Endothelial cell of umbilical vein (primary cell): ENCODE measurements at regions of chr10 and their contacts with region 1.

Region 1: DNA sequence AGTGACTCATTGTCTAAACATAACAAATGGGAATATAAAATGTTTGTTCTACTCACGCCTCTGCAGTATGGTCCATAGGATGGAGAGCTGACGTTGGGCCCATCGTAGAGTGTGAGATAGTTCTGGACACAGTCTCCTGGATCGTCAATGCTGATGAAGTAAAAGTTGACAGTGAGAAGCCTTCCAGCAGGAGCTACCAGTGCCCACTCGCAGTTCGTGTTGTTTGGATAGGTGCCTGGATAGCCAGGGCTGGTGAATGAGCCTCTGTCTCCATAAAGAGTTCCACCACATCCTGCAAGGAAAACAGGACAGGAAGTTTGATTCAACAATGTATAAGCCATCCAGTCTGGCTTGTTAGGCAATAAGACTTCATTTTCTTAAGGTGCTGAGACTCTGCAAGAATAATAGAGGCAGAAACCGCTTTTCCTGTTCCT is 79.6 kb downstream of the OR13A1 start:
- DNase-seq: peak; percentile 78
- H3K4me3 ChIP-seq: no peak overlapping the region
- H3K27ac ChIP-seq: peak overlapping the region; percentile 14
- H3K4me1 ChIP-seq: peaks cover 28% of the 10 kb centered on the region
- H3K27me3 ChIP-seq: no peaks in the 10 kb centered on the region
- CTCF ChIP-seq: no peak
- POLR2A ChIP-seq: no peak

Region 2: GRCh38 chr10:44186150-44186549 is 1049.7 kb before region 1 on chr10:
- CTCF ChIA-PET with region 1: no interaction called
- POLR2A ChIA-PET with region 1: no interaction called
- dilution Hi-C with region 1: no loop called
- intact Hi-C with region 1: no loop called
- DNase-seq: no peak
- H3K4me3 ChIP-seq: no peak overlapping the region
- H3K27ac ChIP-seq: no peak overlapping the region
- H3K4me1 ChIP-seq: no peaks in the 10 kb centered on the region
- H3K27me3 ChIP-seq: no peaks in the 10 kb centered on the region
- CTCF ChIP-seq: no peak
- POLR2A ChIP-seq: no peak

Region 3: GRCh38 chr10:44857363-44858016 is 378.3 kb before region 1 on chr10:
- CTCF ChIA-PET with region 1: no interaction called
- POLR2A ChIA-PET with region 1: no interaction called
- dilution Hi-C with region 1: no loop called
- intact Hi-C with region 1: no loop called
- DNase-seq: peak; percentile 40
- H3K4me3 ChIP-seq: no peak overlapping the region
- H3K27ac ChIP-seq: no peak overlapping the region
- H3K4me1 ChIP-seq: no peaks in the 10 kb centered on the region
- H3K27me3 ChIP-seq: no peaks in the 10 kb centered on the region
- CTCF ChIP-seq: peak; percentile 94 to 97
- POLR2A ChIP-seq: no peak

Region 4: DNA sequence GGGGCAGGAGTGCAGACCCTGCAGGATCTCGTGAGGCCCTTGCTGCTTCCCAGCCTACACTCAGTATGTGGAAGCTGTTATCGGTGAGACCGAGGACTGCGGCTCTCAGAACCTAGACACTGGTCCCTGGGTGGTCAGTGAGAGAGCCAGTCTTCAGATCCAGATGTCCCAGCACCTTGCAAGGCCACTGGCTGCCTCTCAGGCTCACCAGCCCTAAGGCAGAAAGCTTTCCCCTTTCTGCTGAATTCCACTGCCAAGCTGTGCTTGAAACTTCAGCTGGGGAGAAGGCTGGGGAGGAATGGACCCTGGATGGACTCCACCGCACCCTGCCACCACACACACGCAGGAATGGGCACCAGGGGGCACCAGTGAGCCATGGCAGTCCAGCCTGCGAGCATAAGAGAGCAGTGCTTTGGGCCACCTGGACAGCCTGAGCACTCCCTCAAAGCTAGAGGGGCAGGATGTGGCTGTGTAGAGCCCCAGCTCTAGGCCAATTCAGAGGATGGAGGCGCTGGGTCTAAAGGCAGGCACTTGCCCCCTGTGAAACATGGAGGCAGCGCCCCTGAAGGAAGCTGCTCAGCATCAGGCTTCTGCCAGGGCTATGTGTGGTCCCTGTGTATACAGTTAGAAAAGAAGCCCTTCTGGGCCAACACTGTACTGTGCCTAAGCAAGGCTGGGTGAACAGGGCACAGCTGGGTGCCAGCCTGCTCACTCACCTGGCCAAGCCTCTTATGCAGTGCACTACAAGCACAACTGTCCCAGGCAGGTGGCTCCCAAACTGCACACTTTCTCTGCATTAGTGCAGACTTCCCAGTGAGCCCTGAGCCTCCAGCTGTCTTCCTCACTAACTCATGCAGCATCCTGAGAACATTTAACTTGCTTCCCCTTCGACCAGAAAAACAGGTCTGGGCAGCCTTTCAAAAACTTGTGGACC is 303.0 kb before region 1 on chr10:
- CTCF ChIA-PET with region 1: interaction called, 10 read pairs
- POLR2A ChIA-PET with region 1: no interaction called
- dilution Hi-C with region 1: no loop called
- intact Hi-C with region 1: loop called (anchors 2 kb)
- DNase-seq: peak; percentile 76
- H3K4me3 ChIP-seq: no peak overlapping the region
- H3K27ac ChIP-seq: no peak overlapping the region
- H3K4me1 ChIP-seq: no peaks in the 10 kb centered on the region
- H3K27me3 ChIP-seq: no peaks in the 10 kb centered on the region
- CTCF ChIP-seq: peak; percentile 88 to 98
- POLR2A ChIP-seq: no peak

Region 5: GRCh38 chr10:45008524-45009161 is 227.2 kb before region 1 on chr10:
- CTCF ChIA-PET with region 1: interaction called, 11 read pairs
- POLR2A ChIA-PET with region 1: no interaction called
- dilution Hi-C with region 1: no loop called
- intact Hi-C with region 1: loop called (anchors 2 kb)
- DNase-seq: peak; percentile 94
- H3K4me3 ChIP-seq: no peak overlapping the region
- H3K27ac ChIP-seq: no peak overlapping the region
- H3K4me1 ChIP-seq: peaks cover 4% of the 10 kb centered on the region
- H3K27me3 ChIP-seq: no peaks in the 10 kb centered on the region
- CTCF ChIP-seq: peak; percentile 70 to 77
- POLR2A ChIP-seq: no peak

Region 6: DNA sequence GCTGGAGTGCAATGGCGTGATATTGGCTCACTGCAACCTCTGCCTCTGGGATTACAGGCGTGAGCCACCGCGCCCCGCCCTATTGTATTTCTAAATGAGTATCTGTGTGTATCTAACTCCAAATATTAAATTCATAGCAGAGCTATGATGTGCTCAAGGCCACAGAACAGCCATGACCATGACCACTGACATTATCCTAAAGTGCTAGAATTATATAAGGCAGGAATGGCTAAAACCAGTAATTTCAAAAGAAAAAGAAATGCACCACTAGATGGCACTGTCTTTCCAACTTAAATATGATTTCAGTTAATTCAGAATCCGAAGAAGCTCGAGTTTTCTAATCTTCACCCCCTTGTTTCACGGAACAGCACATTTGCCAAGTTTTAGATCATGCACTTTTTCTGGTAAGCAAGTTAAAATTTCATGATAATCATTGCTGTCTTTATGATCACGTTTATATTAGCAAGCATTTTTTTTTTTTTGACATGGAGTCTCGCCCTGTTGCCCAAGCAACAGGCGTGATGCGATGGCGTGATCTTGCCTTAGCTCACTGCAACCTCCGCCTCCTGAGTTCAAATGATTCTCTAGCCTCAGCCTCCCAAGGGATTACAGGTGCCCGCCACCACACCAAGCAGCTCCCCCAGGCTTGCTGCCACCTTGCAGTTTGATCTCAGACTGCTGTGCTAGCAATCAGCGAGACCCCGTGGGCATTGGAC is 14.3 kb after region 1 on chr10:
- CTCF ChIA-PET with region 1: interaction called, 70 read pairs
- POLR2A ChIA-PET with region 1: no interaction called
- dilution Hi-C with region 1: no loop called
- intact Hi-C with region 1: loop called (anchors 1 kb)
- DNase-seq: peak; percentile 71
- H3K4me3 ChIP-seq: peak overlapping the region in 2 of 3 experiments; percentile 21 to 58
- H3K27ac ChIP-seq: peak overlapping the region; percentile 23
- H3K4me1 ChIP-seq: no peaks in the 10 kb centered on the region
- H3K27me3 ChIP-seq: peaks cover 0 to 3% of the 10 kb centered on the region in 2 experiments
- CTCF ChIP-seq: peak; percentile 11 to 28
- POLR2A ChIP-seq: no peak

Region 7: GRCh38 chr10:45353186-45353585 is 117.4 kb after region 1 on chr10:
- CTCF ChIA-PET with region 1: no interaction called
- POLR2A ChIA-PET with region 1: no interaction called
- dilution Hi-C with region 1: no loop called
- intact Hi-C with region 1: no loop called
- DNase-seq: no peak
- H3K4me3 ChIP-seq: no peak overlapping the region
- H3K27ac ChIP-seq: no peak overlapping the region
- H3K4me1 ChIP-seq: no peaks in the 10 kb centered on the region
- H3K27me3 ChIP-seq: peaks cover 0 to 1% of the 10 kb centered on the region in 2 experiments
- CTCF ChIP-seq: no peak
- POLR2A ChIP-seq: no peak

Region 8: GRCh38 chr10:45505311-45505710 is 269.5 kb after region 1 on chr10:
- CTCF ChIA-PET with region 1: no interaction called
- POLR2A ChIA-PET with region 1: no interaction called
- dilution Hi-C with region 1: no loop called
- intact Hi-C with region 1: no loop called
- DNase-seq: no peak
- H3K4me3 ChIP-seq: no peak overlapping the region
- H3K27ac ChIP-seq: no peak overlapping the region
- H3K4me1 ChIP-seq: no peaks in the 10 kb centered on the region
- H3K27me3 ChIP-seq: no peaks in the 10 kb centered on the region
- CTCF ChIP-seq: no peak
- POLR2A ChIP-seq: no peak

Region 9: GRCh38 chr10:45672181-45673073 is 436.6 kb after region 1 on chr10 and contains the start of gene ZFAND4:
- CTCF ChIA-PET with region 1: interaction called, 9 read pairs
- POLR2A ChIA-PET with region 1: no interaction called
- dilution Hi-C with region 1: no loop called
- intact Hi-C with region 1: loop called (anchors 1 kb)
- DNase-seq: peak; percentile 97
- H3K4me3 ChIP-seq: peak within 1 kb of the TSS; percentile 33 to 78 (median 59)
- H3K27ac ChIP-seq: peak within 1 kb of the TSS; percentile 52
- H3K4me1 ChIP-seq: peaks cover 6% of the 10 kb centered on the region
- H3K27me3 ChIP-seq: no peaks in the 10 kb centered on the region
- CTCF ChIP-seq: peak; percentile 68 to 82
- POLR2A ChIP-seq: peak; percentile 55
- total RNA-seq, gene ZFAND4: 7.2 and 7.8 TPM in 2 replicates

Region 10: DNA sequence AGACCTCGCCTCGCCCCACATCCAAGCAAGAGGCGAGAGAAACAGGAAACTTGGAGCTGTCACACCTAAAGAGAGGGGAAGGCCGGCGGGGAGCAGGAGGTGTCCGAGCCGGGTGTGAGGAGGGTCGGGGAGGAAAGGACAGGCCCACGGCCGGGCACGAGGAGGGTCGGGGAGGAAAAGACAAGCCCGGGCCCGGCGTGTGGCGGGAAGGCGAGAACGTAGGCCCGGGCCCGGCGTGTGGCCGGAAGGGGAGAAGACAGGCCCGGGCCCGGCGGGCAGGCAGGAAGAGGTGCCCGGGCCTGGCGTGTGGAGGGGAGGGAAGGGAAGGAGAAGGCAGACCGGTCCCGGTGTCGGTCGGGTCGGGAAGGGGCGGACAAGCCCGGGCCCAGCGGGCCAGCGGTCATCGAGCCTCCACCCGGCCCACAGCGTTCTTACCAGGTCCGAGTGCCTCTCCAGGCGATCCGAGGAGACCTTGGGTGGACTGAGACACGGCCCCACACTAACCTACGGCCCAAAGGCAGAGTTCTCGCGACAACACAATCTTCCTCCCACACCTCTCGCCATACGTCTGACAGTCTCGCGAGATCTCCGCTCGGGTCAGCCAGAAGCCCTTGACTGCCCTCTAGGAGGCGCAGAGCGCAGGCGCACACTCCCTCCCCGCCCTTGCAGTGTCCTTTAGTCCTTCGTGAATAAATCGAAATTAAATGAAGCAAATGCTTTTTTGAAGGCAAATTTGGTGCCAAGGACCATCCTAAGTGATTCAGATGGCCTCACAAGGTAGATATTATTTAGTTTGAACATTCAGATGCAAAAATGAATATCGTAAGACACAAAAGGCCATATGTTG is 794.5 kb after region 1 on chr10 and contains the start of gene NCOA4:
- CTCF ChIA-PET with region 1: interaction called, 3 read pairs
- POLR2A ChIA-PET with region 1: no interaction called
- dilution Hi-C with region 1: no loop called
- intact Hi-C with region 1: loop called (anchors 2 kb)
- DNase-seq: peak; percentile 98
- H3K4me3 ChIP-seq: peak within 1 kb of the TSS; percentile 75 to 94 (median 85)
- H3K27ac ChIP-seq: peak within 1 kb of the TSS; percentile 71
- H3K4me1 ChIP-seq: peaks cover 36% of the 10 kb centered on the region
- H3K27me3 ChIP-seq: no peaks in the 10 kb centered on the region
- CTCF ChIP-seq: peak; percentile 74 to 78
- POLR2A ChIP-seq: peak; percentile 97
- total RNA-seq, gene NCOA4: 119 and 127 TPM in 2 replicates